ENCODE measurements at regions of chr14 and their contacts with region 1.

Region 1: GRCh38 chr14:64671591-64671990 is 32.6 kb upstream of the PLEKHG3 start:
- DNase-seq: peak in 4 of 35 experiments; percentile 4 to 76 (median 16)
- ATAC-seq: peak; percentile 41 to 62 (median 53)
- H3K4me3 ChIP-seq: no peak overlapping the region
- H3K4me3 Mint-ChIP-seq: no peak overlapping the region
- H3K27ac ChIP-seq: peak overlapping the region; percentile 27
- H3K27ac Mint-ChIP-seq: peak overlapping the region in 1 of 2 donors; percentile 66
- H3K4me1 ChIP-seq: peaks cover 12 to 30% of the 10 kb centered on the region in 2 experiments
- H3K4me1 Mint-ChIP-seq: peaks cover 21 to 32% (median 25%) of the 10 kb centered on the region in 3 donors
- H3K27me3 ChIP-seq: no peaks in the 10 kb centered on the region
- H3K27me3 Mint-ChIP-seq: peaks cover 0 to 3% of the 10 kb centered on the region in 2 donors

Region 2: GRCh38 chr14:63777024-63777423 is 894.6 kb before region 1 on chr14:
- CTCF ChIA-PET with region 1: interaction called in 1 of 2 experiments, 10 read pairs
- POLR2A ChIA-PET with region 1: no interaction called
- DNase-seq: no peak
- ATAC-seq: no peak
- H3K4me3 ChIP-seq: no peak overlapping the region
- H3K4me3 Mint-ChIP-seq: no peak overlapping the region
- H3K27ac ChIP-seq: no peak overlapping the region
- H3K27ac Mint-ChIP-seq: no peak overlapping the region
- H3K4me1 ChIP-seq: no peaks in the 10 kb centered on the region
- H3K4me1 Mint-ChIP-seq: no peaks in the 10 kb centered on the region
- H3K27me3 ChIP-seq: no peaks in the 10 kb centered on the region
- H3K27me3 Mint-ChIP-seq: no peaks in the 10 kb centered on the region

Measured in T-cell (primary cell).